GM13977 (cell line): ENCODE measurements at regions of chr9 and their contacts with region 1.

Region 1: GRCh38 chr9:613771-614347 is 227.6 kb upstream of the DMRT1 start:
- DNase-seq: peak; percentile 63
- CTCF ChIP-seq: peak; percentile 86

Region 2: GRCh38 chr9:385818-386398 is 228.0 kb before region 1 on chr9:
- in situ Hi-C with region 1: no loop called
- DNase-seq: no peak
- CTCF ChIP-seq: peak; percentile 33

Region 3: DNA sequence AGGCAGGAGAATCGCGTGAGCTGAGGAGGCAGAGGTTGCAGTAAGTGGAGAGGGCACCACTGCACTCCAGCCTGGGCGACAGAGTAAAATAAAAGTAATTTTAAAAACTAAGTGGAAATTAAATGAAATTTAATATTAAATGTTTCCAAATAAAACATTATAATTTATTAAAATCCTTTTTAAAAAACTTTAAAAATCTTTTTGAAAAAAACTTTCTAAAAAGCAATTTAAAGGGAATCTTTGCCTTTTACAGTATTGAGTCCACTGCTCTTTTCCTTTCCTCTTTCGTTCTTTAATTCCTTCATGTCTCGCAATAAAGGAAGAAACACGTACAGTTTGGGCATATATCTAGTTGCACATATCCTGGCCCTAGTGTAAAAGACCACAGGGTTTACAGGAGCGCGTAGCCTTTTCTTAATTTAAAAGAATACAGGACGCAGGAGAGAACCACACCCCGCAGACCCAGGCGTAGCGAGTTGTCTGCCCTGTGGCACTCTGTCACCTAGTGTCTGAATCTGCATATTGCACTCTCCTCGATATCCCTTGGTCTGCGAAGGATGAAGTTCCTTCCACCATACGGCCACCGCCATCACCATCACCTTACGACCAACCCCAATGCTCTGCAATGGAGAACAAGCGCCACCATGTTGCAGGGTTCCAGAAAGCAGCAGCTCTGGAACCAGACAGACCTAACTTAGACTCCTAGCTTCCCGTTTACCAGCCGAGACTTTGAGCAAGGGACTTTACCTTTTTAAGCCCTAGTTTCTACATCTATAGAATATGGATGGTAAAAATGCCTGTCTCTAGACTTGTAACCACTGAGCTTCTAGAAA is 150.0 kb after region 1 on chr9:
- in situ Hi-C with region 1: loop called (anchors 10 kb)
- DNase-seq: peak; percentile 73
- CTCF ChIP-seq: peak; percentile 53

Region 4: GRCh38 chr9:976258-976942 is 362.5 kb after region 1 on chr9 and contains the start of gene DMRT3:
- in situ Hi-C with region 1: loop called (anchors 25 kb)
- DNase-seq: peak; percentile 56
- CTCF ChIP-seq: no peak